ENCODE measurements at regions of chr2 and their contacts with region 1.

Region 1: DNA sequence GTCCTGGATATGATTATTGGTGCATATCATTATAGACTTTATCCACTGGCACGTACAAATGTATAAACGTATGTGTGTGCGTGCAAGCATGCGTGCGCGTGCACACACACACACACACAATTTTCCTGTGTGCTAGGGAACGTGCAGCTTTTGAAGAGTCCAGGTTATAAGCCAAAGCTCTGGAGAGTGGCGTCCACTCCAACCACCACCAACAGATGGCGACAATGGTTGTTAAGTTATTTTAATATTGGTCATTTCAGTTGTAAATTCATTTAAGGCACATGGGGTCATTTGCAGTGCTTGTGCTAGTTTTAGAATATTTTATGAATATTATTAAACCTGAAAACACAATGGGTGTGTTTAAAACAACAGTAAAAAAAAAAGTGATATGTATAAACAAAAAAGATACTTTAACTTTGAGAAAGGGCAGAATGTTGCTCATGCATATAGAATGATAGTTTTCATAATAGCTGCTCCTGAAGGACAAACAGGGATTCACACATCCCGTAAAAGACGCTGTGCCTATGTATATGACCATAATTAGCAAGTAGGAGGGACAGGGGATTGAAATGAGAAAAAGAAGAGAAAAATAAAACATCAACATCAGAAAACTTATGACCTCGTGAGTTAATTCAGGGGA is 124.2 kb upstream of the ITGB6 start:
- DNase-seq: no peak
- H3K4me3 ChIP-seq: no peak overlapping the region
- H3K27ac ChIP-seq: no peak overlapping the region
- H3K4me1 ChIP-seq: peaks cover 16 to 78% (median 18%) of the 10 kb centered on the region in 3 donors
- H3K27me3 ChIP-seq: no peaks in the 10 kb centered on the region
- CTCF ChIP-seq: peak; percentile 40 to 77 (median 70)
- POLR2A ChIP-seq: no peak

Region 2: GRCh38 chr2:160252278-160252887 is 71.9 kb before region 1 on chr2:
- intact Hi-C with region 1: loop called (anchors 5 kb)
- DNase-seq: no peak
- H3K4me3 ChIP-seq: no peak overlapping the region
- H3K27ac ChIP-seq: no peak overlapping the region
- H3K4me1 ChIP-seq: peaks cover 0 to 45% (median 5%) of the 10 kb centered on the region in 3 donors
- H3K27me3 ChIP-seq: no peaks in the 10 kb centered on the region
- CTCF ChIP-seq: peak; percentile 37 to 83 (median 76)
- POLR2A ChIP-seq: no peak

Region 3: GRCh38 chr2:160406591-160407392 is 82.5 kb after region 1 on chr2:
- intact Hi-C with region 1: loop called (anchors 10 kb)
- DNase-seq: peak; percentile 37
- H3K4me3 ChIP-seq: peak overlapping the region; percentile 84 to 99 (median 92)
- H3K27ac ChIP-seq: peak overlapping the region; percentile 92 to 99 (median 96)
- H3K4me1 ChIP-seq: peaks cover 33 to 82% (median 59%) of the 10 kb centered on the region in 3 donors
- H3K27me3 ChIP-seq: no peaks in the 10 kb centered on the region
- CTCF ChIP-seq: no peak
- POLR2A ChIP-seq: peak in 2 of 4 donors; percentile 46 to 64